ENCODE measurements at regions of chr2 and their contacts with region 1.

Region 1: DNA sequence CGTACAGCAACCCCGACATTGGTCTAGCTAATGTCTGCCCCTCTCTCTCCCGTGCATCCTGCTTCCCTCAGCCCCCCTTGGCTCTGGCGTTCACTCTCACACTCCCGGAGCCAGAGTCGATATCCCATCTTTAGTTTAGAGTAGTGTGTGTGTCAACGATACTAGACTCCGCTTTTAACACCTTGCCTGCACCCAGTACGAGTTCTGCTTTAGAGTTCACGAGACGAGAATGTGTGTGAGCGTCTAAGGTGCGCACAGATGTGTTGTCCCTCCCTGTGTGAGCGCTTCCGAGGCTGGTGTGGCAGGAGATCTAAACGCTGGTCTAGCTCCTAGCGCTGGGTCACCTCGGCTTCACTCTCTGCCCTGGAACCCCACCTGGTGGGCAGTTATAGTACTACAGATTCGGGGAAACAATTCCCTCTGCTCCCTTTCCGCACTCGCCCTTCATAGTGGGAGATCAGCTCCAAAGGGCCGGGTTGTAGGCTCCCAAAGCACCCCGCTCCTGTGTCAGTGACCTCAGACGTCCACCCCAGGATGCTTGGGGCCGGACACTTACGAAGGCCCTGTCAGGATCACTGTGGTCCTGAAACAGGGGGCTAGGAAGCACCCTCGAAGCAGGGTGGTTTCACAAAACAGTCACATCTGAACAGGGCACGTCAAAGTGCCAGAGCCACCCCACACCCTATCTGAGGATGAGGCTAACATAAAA is 2.6 kb upstream of the CYP26B1 start:
- DNase-seq: peak; percentile 83 to 92
- ATAC-seq: peak; percentile 66 to 83
- H3K4me3 ChIP-seq: peak overlapping the region; percentile 61
- H3K27ac ChIP-seq: peak overlapping the region; percentile 29 to 59; a peak in 4 of 6 replicates
- H3K4me1 ChIP-seq: peaks cover 36% of the 10 kb centered on the region
- CTCF ChIP-seq: peak; percentile 89
- EP300 ChIP-seq: no peak
- POLR2A ChIP-seq: no peak
- RAD21 ChIP-seq: peak; percentile 95 to 97

Region 2: DNA sequence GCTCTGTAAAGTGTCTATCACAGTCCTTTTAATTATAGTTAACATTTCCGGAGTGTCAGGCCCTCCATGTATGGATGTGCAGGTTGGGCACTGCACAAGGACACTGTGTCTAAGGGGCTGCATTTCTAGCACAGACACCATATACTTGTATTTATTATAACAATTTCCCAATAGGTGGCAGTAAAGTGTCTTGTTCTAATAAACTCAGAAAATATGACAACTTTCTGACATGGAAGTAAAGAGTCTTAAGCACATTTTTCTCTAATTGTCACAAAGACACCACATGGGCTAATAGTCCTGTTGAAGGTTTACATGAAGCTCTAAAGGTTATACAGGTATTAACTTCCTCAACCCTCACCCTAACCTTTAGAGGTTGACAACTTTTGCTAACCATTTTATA is 540.4 kb before region 1 on chr2:
- CTCF ChIA-PET with region 1: interaction called, 15 read pairs
- POLR2A ChIA-PET with region 1: no interaction called
- DNase-seq: peak; percentile 42 to 50
- ATAC-seq: peak; percentile 57 to 80; a peak in 4 of 6 replicates
- H3K4me3 ChIP-seq: no peak overlapping the region
- H3K27ac ChIP-seq: no peak overlapping the region
- H3K4me1 ChIP-seq: no peaks in the 10 kb centered on the region
- CTCF ChIP-seq: peak; percentile 75
- EP300 ChIP-seq: no peak
- POLR2A ChIP-seq: no peak
- RAD21 ChIP-seq: peak; percentile 69 to 76

Region 3: DNA sequence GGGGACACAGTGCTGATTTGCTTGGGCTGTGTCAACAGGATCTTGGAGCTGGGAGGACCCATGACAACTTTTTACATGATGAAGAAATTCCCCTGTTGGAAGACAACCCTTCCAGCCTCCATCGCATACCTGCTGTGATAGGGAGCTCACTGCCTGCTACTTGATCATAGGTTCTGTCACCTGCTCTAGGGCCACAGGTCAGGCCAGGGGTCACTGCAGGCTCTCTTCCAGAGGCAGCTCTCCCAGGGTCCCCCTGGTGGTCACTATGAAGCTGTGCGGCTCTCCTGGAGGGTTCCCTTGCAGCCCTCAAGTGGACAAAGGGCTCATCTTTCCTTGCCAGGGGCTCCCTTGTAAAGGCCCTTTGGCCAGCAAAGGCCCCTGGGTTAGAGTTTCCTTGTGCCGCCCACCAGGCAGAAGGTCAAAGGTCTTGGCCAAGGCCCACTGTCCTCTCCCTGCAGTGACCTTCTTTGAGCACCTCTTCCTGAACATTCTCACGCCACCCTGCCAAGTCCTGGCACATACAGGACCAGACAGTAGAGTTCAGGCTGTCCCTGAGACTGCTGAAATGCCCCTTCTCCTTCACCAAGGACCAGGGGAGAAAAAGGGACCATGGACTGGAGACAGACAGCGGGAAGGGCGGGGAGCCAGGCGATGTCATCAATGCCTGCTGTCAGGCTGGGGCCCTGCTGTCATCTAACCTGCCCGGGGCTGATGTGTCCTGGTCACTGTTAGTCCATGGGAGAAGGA is 351.9 kb before region 1 on chr2:
- CTCF ChIA-PET with region 1: interaction called, 36 read pairs
- POLR2A ChIA-PET with region 1: no interaction called
- DNase-seq: peak; percentile 71 to 74
- ATAC-seq: peak; percentile 73 to 90
- H3K4me3 ChIP-seq: no peak overlapping the region
- H3K27ac ChIP-seq: no peak overlapping the region
- H3K4me1 ChIP-seq: peaks cover 9% of the 10 kb centered on the region
- CTCF ChIP-seq: peak; percentile 79
- EP300 ChIP-seq: no peak
- POLR2A ChIP-seq: no peak
- RAD21 ChIP-seq: peak; percentile 70 to 75

Region 4: DNA sequence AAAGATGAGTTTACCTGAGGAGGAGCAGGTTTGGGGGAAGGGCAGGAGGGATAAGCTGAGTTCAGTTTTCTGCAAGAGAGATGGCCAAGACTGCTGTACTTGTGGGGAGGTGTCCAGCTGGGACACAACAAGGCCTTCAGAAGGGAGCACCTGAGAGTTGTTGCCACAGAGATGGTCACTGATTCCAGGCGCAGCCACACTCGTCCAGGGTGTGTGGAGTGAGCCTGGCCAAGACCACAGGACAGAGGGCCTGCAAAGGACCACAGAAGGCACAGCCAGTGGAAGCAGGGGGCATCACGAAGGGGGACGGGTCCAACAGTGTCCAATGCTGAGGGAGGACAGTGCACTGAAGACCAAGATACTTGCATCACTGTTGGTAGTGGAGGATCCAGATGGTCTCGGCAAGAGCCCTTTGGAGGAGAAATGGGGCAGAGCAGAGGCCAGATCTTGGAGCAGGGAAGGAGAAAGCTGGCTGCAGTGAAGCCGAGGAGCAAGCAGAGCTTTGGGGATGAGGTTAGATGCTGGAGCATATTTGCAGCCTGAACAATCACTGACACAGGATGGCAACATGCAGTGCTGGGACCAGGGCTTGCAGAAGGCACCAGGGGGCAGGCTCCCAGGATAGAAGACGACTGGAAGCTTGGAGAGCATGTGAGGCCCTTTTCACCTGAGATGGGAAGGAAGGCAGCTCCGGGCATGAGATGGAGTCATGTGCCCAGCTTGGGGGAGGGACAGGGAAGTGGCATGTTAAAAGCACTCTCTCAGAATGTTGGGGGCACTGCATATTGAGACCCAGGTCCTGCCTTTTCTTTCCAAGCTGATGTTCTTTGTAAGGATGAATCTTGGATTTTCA is 216.6 kb before region 1 on chr2:
- CTCF ChIA-PET with region 1: interaction called, 159 read pairs
- POLR2A ChIA-PET with region 1: no interaction called
- DNase-seq: peak in 1 of 2 experiments; percentile 69
- ATAC-seq: peak; percentile 65 to 88; a peak in 4 of 6 replicates
- H3K4me3 ChIP-seq: no peak overlapping the region
- H3K27ac ChIP-seq: peak overlapping the region in 1 of 2 experiments; percentile 25; a peak in 1 of 6 replicates
- H3K4me1 ChIP-seq: peaks cover 16% of the 10 kb centered on the region; the same call in 2 of the 3 replicates
- CTCF ChIP-seq: peak; percentile 18; the same call in 1 of the 3 replicates
- EP300 ChIP-seq: no peak
- POLR2A ChIP-seq: no peak
- RAD21 ChIP-seq: peak in 1 of 2 experiments; percentile 50; a peak in 3 of 5 replicates

Region 5: DNA sequence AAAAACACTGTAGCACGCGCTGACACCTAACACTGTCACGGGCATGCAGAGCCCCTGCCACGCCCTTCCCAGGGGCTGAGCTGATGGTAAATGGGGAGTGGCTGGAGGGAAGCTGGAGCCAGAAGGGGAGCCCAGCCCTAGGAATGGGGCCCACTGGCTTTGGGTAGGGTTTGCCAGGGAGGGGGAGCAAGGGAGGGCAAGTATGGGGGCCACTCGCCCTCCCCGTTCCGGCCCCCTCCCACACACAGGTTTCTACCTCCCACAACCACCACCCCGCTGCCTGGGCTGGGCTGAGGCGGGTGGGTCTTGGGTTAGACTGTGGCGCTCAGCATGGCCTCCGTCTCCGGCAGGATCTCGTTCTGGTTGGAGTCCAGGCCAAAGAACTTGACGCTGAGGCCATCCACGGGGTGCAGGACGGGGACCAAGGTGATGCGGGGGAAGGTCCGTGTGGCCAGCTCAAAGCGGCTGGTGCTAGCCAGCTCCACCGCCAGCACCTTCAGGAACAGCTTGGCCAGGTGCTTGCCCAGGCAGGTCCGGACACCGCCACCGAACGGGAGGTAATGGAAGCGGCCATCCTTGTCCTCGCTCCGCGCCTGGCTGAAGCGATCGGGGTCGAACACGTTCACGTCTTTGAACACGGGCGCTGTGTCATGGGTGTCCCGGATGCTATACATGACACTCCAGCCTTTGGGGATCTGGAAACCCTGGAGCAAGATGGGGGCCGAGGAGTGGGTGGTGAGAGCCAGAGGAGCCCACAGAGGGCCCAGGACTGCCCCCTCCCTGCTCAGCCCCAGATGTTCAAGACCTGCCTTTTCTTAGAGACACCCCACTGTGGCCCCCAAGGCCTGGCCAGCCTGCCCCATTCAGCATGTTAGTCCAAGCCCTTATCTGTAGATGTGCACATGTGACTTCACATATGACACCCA is 18.1 kb before region 1 on chr2:
- CTCF ChIA-PET with region 1: interaction called, 37 read pairs
- POLR2A ChIA-PET with region 1: no interaction called
- DNase-seq: no peak
- ATAC-seq: no peak
- H3K4me3 ChIP-seq: no peak overlapping the region
- H3K27ac ChIP-seq: no peak overlapping the region
- H3K4me1 ChIP-seq: peaks cover 1% of the 10 kb centered on the region; the same call in 2 of the 3 replicates
- CTCF ChIP-seq: no peak
- EP300 ChIP-seq: no peak
- POLR2A ChIP-seq: no peak
- RAD21 ChIP-seq: no peak

Region 6: DNA sequence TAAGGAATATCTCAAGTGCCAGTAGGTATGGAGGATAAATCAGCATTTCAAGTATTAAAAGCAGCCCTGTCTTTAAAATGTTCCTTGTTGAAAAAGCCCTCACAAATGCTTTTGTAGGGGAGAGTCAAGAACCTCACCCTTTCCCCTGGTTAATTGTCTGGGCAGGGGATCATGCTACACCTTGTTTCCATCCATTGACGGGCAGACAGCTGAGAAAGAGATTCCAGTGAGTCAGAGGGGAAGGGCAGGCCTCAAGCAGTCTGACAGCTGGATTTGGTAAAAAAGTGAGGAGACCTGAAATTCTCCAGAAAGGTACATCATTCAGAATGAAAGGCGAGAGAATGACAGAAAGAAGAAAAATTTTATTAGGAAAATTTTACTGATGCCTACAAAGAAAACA is 200.5 kb after region 1 on chr2:
- CTCF ChIA-PET with region 1: no interaction called
- POLR2A ChIA-PET with region 1: no interaction called
- DNase-seq: no peak
- ATAC-seq: no peak
- H3K4me3 ChIP-seq: no peak overlapping the region
- H3K27ac ChIP-seq: no peak overlapping the region
- H3K4me1 ChIP-seq: no peaks in the 10 kb centered on the region
- CTCF ChIP-seq: no peak
- EP300 ChIP-seq: no peak
- POLR2A ChIP-seq: no peak
- RAD21 ChIP-seq: no peak

Region 7: DNA sequence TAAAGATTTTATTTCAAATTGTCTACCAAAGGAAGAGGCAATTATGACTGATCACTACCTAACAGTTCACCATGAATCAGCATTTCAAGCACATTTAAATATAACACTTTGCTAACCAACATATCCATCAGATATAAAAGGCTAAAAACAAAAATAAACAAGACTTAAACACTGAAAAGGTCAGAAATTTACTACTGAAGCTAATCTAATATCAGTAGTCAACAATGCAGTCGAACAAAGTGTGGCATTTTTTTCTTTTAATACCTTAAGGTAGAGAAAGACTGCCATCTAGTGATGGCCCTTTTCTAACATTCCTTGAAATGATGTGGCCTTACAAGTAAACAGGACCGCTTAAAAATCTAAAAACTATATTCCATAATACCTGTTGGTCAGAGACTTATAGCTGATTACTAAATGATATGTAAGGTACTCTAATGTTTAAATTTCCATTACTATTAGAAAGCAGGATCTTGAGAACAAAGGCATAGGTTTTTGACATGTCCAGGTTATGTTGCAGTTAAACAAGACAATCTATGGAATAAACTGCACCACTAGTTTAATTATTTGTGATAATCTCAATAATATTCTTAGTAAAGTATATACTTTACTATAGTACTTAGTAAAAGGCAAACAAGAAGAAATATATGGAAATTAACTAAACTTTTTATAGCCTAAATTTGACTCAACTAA is 595.5 kb after region 1 on chr2:
- CTCF ChIA-PET with region 1: interaction called, 81 read pairs
- POLR2A ChIA-PET with region 1: no interaction called
- DNase-seq: peak; percentile 40 to 87
- ATAC-seq: peak; percentile 66 to 80; a peak in 4 of 6 replicates
- H3K4me3 ChIP-seq: no peak overlapping the region
- H3K27ac ChIP-seq: peak overlapping the region; percentile 46 to 58; a peak in 4 of 6 replicates
- H3K4me1 ChIP-seq: peaks cover 39% of the 10 kb centered on the region
- CTCF ChIP-seq: peak; percentile 98
- EP300 ChIP-seq: no peak
- POLR2A ChIP-seq: no peak
- RAD21 ChIP-seq: peak; percentile 98